B cell (primary cell): ENCODE measurements at regions of chr19 and their contacts with region 1.

Region 1: GRCh38 chr19:29610563-29611271 is 4.6 kb downstream of the POP4 start:
- DNase-seq: peak; percentile 95
- ATAC-seq: peak; percentile 83
- H3K4me3 ChIP-seq: no peak overlapping the region
- H3K4me3 Mint-ChIP-seq: no peak overlapping the region
- H3K27ac ChIP-seq: peak overlapping the region; percentile 85 to 91
- H3K27ac Mint-ChIP-seq: peak overlapping the region; percentile 83
- H3K4me1 ChIP-seq: peaks cover 15 to 27% of the 10 kb centered on the region in 2 donors
- H3K4me1 Mint-ChIP-seq: peaks cover 33% of the 10 kb centered on the region
- H3K27me3 ChIP-seq: no peaks in the 10 kb centered on the region
- H3K27me3 Mint-ChIP-seq: no peaks in the 10 kb centered on the region
- CTCF ChIP-seq: peak; percentile 88

Region 2: DNA sequence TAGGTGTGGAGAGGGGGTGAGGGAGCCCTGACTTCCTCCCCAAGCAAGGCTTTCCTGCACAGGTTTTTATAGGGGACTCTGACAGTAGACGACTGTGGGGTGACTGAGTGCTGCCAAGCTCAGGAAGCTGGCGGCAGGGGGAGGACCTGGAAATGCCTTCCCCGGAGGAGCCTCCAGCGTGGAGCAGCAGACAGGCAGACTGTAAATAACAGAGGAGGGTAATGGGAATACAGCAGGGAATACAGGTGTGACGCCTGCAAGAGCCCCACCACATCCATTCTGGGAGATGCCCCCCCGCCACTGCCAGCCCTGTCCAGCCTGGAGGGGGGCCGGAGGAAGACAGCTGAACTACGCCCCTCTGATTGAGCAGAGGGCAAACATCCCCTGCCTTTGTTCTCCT is 588.1 kb before region 1 on chr19:
- CTCF ChIA-PET with region 1: no interaction called
- POLR2A ChIA-PET with region 1: no interaction called
- intact Hi-C with region 1: no loop called
- DNase-seq: no peak
- ATAC-seq: no peak
- H3K4me3 ChIP-seq: no peak overlapping the region
- H3K4me3 Mint-ChIP-seq: no peak overlapping the region
- H3K27ac ChIP-seq: no peak overlapping the region
- H3K27ac Mint-ChIP-seq: no peak overlapping the region
- H3K4me1 ChIP-seq: no peaks in the 10 kb centered on the region
- H3K4me1 Mint-ChIP-seq: no peaks in the 10 kb centered on the region
- H3K27me3 ChIP-seq: no peaks in the 10 kb centered on the region
- H3K27me3 Mint-ChIP-seq: no peaks in the 10 kb centered on the region
- CTCF ChIP-seq: no peak

Region 3: DNA sequence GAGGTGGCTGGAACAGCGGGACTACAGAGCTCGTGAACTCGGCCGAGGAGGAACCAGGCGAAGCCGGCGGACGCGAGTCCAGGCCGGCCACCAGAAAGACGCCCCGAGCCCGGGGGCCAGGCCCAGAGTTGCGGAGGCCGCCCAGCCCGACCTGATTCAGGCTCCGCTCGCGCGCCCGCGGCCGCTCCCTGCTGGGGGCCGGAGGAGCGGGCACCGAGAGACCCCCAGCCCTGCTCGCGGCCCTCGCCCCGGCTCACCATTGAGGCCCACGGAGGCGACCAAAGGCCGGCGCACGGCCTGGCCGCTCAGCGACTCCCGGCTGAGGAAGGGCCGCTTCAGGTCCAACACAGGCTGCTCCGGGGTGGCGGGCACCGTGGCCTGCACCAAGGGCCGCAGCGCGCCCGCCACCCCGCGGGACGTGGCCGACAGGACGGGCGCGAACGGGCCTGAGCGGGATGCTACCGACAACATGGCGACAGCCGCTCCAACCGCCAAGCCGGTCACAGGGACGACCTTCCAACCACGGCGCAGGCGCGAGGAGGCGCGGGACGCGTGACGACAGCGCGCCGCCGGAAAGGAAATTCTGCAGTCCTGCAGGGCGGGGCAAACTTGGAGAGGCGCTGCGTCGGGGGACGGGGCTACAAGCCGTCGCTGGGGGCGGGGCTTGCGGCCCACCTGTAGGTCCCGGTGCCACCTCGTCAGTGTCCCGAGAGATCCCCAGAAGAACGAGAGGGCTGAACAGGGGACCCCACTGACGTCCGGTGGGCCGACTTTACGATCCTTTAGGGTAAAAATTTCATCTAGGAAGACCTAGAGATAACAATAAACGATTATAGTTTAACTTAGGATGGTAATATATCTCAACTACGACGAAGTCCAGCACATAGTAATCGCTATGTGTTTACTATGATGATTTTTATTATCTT is 397.8 kb before region 1 on chr19 and contains the start of gene UQCRFS1:
- CTCF ChIA-PET with region 1: interaction called, 3 read pairs
- POLR2A ChIA-PET with region 1: no interaction called
- intact Hi-C with region 1: loop called (anchors 5 kb)
- DNase-seq: peak; percentile 95
- ATAC-seq: peak; percentile 98
- H3K4me3 ChIP-seq: peak within 1 kb of the TSS; percentile 68 to 98 (median 83)
- H3K4me3 Mint-ChIP-seq: peak within 1 kb of the TSS; percentile 96
- H3K27ac ChIP-seq: peak within 1 kb of the TSS; percentile 62 to 92
- H3K27ac Mint-ChIP-seq: peak within 1 kb of the TSS; percentile 90
- H3K4me1 ChIP-seq: peaks cover 15 to 17% of the 10 kb centered on the region in 2 donors
- H3K4me1 Mint-ChIP-seq: peaks cover 36% of the 10 kb centered on the region
- H3K27me3 ChIP-seq: peaks cover 0 to 10% (median 0%) of the 10 kb centered on the region in 4 experiments
- H3K27me3 Mint-ChIP-seq: peaks cover 15% of the 10 kb centered on the region
- CTCF ChIP-seq: no peak
- total RNA-seq, gene UQCRFS1: 15.2 and 15.6 TPM in 2 replicates

Region 4: GRCh38 chr19:29576761-29577648 is 33.7 kb before region 1 on chr19:
- CTCF ChIA-PET with region 1: no interaction called
- POLR2A ChIA-PET with region 1: no interaction called
- intact Hi-C with region 1: no loop called
- DNase-seq: no peak
- ATAC-seq: no peak
- H3K4me3 ChIP-seq: no peak overlapping the region
- H3K4me3 Mint-ChIP-seq: no peak overlapping the region
- H3K27ac ChIP-seq: no peak overlapping the region
- H3K27ac Mint-ChIP-seq: no peak overlapping the region
- H3K4me1 ChIP-seq: no peaks in the 10 kb centered on the region
- H3K4me1 Mint-ChIP-seq: peaks cover 5% of the 10 kb centered on the region
- H3K27me3 ChIP-seq: peaks cover 0 to 13% (median 0%) of the 10 kb centered on the region in 4 experiments
- H3K27me3 Mint-ChIP-seq: peaks cover 60% of the 10 kb centered on the region
- CTCF ChIP-seq: no peak

Region 5: DNA sequence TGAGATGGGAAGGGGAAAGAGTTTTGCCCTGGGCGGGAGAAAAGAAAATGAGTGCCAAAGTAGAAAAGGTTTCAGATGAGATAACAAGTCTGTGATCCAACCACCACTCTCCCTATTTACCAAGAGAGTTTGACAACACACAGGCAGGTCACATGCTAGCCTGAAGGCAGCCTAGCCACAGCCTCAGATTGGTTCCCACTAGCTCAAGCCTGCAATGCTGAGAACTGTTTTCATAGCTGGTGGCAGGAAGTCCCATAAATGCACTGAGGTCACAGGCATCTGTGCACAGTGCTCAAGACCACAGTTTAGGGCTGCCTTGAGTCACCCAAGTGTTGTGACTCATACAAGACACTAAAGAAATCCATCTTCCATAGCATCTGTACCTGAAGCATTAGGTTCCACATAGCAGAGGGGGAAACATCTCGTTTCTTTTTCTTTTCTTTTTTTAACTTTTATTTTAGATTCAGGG is 23.2 kb before region 1 on chr19:
- CTCF ChIA-PET with region 1: no interaction called
- POLR2A ChIA-PET with region 1: no interaction called
- intact Hi-C with region 1: no loop called
- DNase-seq: no peak
- ATAC-seq: no peak
- H3K4me3 ChIP-seq: no peak overlapping the region
- H3K4me3 Mint-ChIP-seq: no peak overlapping the region
- H3K27ac ChIP-seq: no peak overlapping the region
- H3K27ac Mint-ChIP-seq: no peak overlapping the region
- H3K4me1 ChIP-seq: no peaks in the 10 kb centered on the region
- H3K4me1 Mint-ChIP-seq: no peaks in the 10 kb centered on the region
- H3K27me3 ChIP-seq: peaks cover 0 to 30% (median 4%) of the 10 kb centered on the region in 4 experiments
- H3K27me3 Mint-ChIP-seq: peaks cover 28% of the 10 kb centered on the region
- CTCF ChIP-seq: no peak

Region 6: GRCh38 chr19:29636553-29637360 is 26.0 kb after region 1 on chr19:
- CTCF ChIA-PET with region 1: no interaction called
- POLR2A ChIA-PET with region 1: no interaction called
- intact Hi-C with region 1: no loop called
- DNase-seq: no peak
- ATAC-seq: no peak
- H3K4me3 ChIP-seq: no peak overlapping the region
- H3K4me3 Mint-ChIP-seq: no peak overlapping the region
- H3K27ac ChIP-seq: no peak overlapping the region
- H3K27ac Mint-ChIP-seq: no peak overlapping the region
- H3K4me1 ChIP-seq: no peaks in the 10 kb centered on the region
- H3K4me1 Mint-ChIP-seq: no peaks in the 10 kb centered on the region
- H3K27me3 ChIP-seq: peaks cover 0 to 2% (median 0%) of the 10 kb centered on the region in 4 experiments
- H3K27me3 Mint-ChIP-seq: peaks cover 3% of the 10 kb centered on the region
- CTCF ChIP-seq: no peak

Region 7: DNA sequence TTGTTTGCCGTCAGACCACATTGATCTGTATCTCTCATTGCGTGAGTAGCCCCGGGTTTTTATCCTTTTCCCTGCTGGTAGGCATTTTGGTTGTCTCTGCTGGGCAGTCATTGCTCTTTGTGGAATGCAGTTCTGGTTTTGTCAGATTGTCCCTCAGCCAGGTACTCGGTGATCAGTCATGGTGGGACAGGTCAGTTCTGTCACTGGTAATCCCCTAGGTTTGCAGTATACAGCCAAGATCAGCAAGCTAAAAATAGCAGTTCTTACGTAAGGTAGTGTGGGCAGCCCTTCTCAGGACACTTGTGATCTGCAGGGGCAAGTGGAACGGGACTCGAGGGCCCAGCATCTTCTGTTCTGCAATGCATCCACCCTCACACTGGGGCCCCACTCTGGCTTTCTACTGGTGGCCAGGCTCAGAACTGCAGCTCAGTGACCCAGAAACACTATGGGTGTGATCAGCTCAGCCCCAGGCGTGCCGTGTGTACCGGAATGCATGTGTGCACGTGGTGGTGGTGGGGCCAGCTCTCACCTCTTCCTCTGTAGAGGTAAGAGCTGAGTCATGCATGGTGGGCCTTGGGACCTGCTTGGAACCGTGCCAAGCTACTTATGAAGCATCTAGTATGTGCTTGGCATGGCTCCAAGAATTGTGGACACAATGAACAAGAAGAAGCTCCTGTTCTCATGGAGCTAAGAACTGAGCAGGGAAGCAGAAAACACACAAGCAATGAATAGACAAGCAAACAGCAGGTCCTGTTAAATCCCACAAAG is 60.9 kb after region 1 on chr19:
- CTCF ChIA-PET with region 1: interaction called, 116 read pairs
- POLR2A ChIA-PET with region 1: interaction called, 12 read pairs
- intact Hi-C with region 1: loop called (anchors 1 kb)
- DNase-seq: peak; percentile 82
- ATAC-seq: peak; percentile 77
- H3K4me3 ChIP-seq: peak overlapping the region in 1 of 5 experiments; percentile 1
- H3K4me3 Mint-ChIP-seq: peak overlapping the region; percentile 61
- H3K27ac ChIP-seq: peak overlapping the region; percentile 89 to 96
- H3K27ac Mint-ChIP-seq: peak overlapping the region; percentile 89
- H3K4me1 ChIP-seq: peaks cover 53 to 69% of the 10 kb centered on the region in 2 donors
- H3K4me1 Mint-ChIP-seq: peaks cover 62% of the 10 kb centered on the region
- H3K27me3 ChIP-seq: no peaks in the 10 kb centered on the region
- H3K27me3 Mint-ChIP-seq: no peaks in the 10 kb centered on the region
- CTCF ChIP-seq: peak; percentile 64

Region 8: DNA sequence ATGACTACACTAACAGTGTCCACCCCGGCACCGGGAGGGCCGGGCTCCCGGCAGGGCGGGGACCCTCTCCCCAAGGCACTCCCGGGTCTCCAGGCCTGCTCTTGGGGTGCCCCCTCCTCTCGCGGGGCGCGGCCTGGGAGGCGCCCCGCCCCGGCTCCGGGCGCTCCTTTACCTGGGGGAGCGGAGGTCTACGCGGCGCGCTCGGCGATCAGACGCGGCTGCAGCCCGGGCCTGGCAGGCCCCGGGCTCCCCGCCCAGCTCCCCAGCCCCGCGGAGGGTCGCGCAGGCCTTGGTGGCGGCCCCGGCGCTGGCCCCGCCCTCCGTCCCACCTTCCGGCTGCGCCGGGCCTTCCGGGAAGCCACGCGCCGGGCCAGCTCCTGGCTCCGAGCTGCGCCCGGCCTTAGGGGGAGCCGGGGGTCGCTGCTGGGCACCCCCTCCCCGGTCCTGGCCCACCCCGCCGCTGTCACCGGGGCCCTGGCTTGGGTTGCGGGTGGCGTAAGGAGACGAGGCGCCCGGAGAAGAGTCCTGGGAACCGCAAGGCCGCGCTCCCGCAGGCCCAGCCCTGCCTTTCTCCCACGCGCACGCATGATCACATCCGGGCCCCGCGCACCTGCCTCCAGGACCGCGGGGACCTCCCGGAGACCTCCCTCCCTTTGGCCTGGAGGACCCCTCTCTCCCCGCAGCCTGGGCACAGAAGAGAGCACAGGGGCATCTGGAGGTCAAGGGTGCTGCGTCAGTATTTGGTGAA is 104.4 kb after region 1 on chr19 and contains the start of gene C19orf12:
- CTCF ChIA-PET with region 1: interaction called, 273 read pairs
- POLR2A ChIA-PET with region 1: interaction called, 29 read pairs
- intact Hi-C with region 1: loop called (anchors 1 kb)
- DNase-seq: peak; percentile 73
- ATAC-seq: peak; percentile 74
- H3K4me3 ChIP-seq: peak within 1 kb of the TSS; percentile 50 to 95 (median 79)
- H3K4me3 Mint-ChIP-seq: peak within 1 kb of the TSS; percentile 93
- H3K27ac ChIP-seq: peak within 1 kb of the TSS; percentile 86 to 95
- H3K27ac Mint-ChIP-seq: peak within 1 kb of the TSS; percentile 96
- H3K4me1 ChIP-seq: peaks cover 30 to 47% of the 10 kb centered on the region in 2 donors
- H3K4me1 Mint-ChIP-seq: peaks cover 49% of the 10 kb centered on the region
- H3K27me3 ChIP-seq: no peaks in the 10 kb centered on the region
- H3K27me3 Mint-ChIP-seq: no peaks in the 10 kb centered on the region
- CTCF ChIP-seq: no peak
- total RNA-seq, gene C19orf12: 25.7 and 29.4 TPM in 2 replicates

Region 9: DNA sequence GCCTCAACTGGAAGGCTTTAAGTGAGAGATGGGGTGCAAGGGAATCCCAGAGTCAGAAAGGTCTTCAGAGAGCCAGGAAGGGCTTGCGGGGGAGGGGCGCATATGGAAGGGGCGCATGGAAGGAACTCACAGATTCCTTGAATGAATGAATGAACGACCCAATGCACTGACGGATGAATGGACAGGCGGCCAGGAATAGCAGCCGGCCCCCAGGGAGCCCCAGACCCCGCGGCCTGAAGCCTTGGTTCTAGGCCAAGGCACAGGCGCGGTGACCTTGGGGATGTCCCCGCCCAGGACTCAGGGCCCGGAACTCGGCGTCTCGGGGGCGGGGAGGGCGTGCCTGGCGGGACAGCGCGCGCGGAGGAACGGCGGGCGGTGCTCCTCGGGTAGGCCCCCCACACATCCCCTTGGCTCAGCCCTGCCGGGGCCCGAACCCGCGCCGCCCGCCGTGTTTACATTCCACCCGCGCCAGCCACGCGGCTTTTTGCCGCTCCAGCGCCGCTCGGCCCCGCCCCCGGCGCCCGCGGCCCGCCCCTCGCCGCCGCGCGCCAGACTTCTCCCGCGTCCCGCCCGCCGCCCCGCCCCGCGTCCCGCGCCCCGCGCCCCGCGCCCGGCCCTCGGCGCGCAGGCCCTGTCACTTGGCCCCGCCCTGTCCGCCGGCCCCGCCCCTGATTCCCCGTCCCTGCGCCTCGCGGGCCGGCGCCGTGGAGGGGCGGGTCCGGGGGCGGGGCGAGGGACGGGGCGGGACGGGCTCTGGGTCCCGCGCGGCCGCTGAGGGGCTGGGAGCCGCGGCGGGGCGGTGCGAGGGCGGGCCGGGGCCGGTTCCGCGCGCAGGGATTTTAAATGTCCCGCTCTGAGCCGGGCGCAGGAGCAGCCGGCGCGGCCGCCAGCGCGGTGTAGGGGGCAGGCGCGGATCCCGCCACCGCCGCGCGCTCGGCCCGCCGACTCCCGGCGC is 200.7 kb after region 1 on chr19 and contains the start of gene CCNE1:
- CTCF ChIA-PET with region 1: interaction called, 3 read pairs
- POLR2A ChIA-PET with region 1: no interaction called
- intact Hi-C with region 1: loop called (anchors 2 kb)
- DNase-seq: peak; percentile 92
- ATAC-seq: peak; percentile 94
- H3K4me3 ChIP-seq: peak within 1 kb of the TSS in 4 of 5 experiments; percentile 42 to 67 (median 58)
- H3K4me3 Mint-ChIP-seq: peak within 1 kb of the TSS; percentile 92
- H3K27ac ChIP-seq: peak within 1 kb of the TSS; percentile 41 to 76
- H3K27ac Mint-ChIP-seq: peak within 1 kb of the TSS; percentile 84
- H3K4me1 ChIP-seq: peaks cover 8 to 25% of the 10 kb centered on the region in 2 donors
- H3K4me1 Mint-ChIP-seq: peaks cover 15% of the 10 kb centered on the region
- H3K27me3 ChIP-seq: peaks cover 0 to 8% (median 0%) of the 10 kb centered on the region in 4 experiments
- H3K27me3 Mint-ChIP-seq: no peaks in the 10 kb centered on the region
- CTCF ChIP-seq: no peak
- total RNA-seq, gene CCNE1: 2.5 and 3.1 TPM in 2 replicates

Region 10: GRCh38 chr19:29873024-29873800 is 262.5 kb after region 1 on chr19:
- CTCF ChIA-PET with region 1: interaction called, 6 read pairs
- POLR2A ChIA-PET with region 1: interaction called, 3 read pairs
- intact Hi-C with region 1: loop called (anchors 1 kb)
- DNase-seq: peak; percentile 83
- ATAC-seq: peak; percentile 88
- H3K4me3 ChIP-seq: peak overlapping the region in 4 of 5 experiments; percentile 31 to 67 (median 54)
- H3K4me3 Mint-ChIP-seq: peak overlapping the region; percentile 84
- H3K27ac ChIP-seq: no peak overlapping the region
- H3K27ac Mint-ChIP-seq: no peak overlapping the region
- H3K4me1 ChIP-seq: peaks cover 17 to 44% of the 10 kb centered on the region in 2 donors
- H3K4me1 Mint-ChIP-seq: peaks cover 13% of the 10 kb centered on the region
- H3K27me3 ChIP-seq: peaks cover 0 to 27% (median 6%) of the 10 kb centered on the region in 4 experiments
- H3K27me3 Mint-ChIP-seq: peaks cover 23% of the 10 kb centered on the region
- CTCF ChIP-seq: peak; percentile 95